Adrenal gland (tissue), 19 donors: ENCODE measurements at regions of chr3 and their contacts with region 1.

Region 1: DNA sequence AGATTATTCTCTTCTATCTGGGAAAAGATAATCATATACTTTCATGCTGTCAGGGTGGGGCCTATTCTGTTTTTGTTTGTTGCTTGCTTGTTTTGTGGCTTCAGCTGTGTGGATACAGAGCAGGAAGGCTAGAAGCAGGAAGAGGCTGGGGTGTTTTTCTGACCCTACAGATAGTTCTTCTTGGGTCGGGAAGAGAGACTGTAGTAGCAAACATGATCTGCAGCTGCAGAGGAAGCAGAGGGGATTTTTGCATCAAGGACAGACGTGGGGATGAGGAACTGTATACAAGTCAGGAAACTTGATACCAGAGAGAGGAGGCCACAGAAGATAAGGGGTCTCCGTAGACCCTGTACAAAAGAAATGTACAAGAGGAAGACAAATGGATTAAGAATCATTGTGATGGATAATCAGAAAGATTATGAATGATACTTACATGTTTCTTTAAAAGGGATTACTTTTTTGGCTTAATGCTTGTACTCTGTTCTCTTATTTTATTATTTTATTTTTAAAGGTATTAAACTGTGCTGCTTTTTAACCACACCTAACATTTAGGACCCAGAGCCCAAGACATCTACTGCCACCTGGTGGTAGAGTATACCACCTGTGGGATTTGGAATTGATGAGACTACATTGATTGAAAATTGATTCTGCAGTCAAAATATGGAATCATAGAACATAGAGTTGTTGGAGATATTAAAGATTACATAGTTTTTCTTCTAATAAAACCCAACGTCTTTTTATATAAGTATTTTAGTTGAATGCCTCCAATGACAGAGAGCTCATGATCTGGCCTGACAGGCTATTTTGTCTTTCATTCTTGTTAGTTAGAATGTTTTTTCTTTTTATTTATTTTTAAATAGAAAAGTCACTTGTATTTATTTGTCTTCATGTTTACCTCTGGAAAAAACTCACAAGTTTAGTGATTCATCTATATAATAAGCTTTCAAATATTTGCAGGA is 87.3 kb upstream of the ROPN1 start:
- DNase-seq: peak in 5 of 7 donors; percentile 21 to 50 (median 46)
- H3K4me3 ChIP-seq: no peak overlapping the region
- H3K27ac ChIP-seq: no peak overlapping the region
- H3K4me1 ChIP-seq: peaks cover 16 to 17% of the 10 kb centered on the region in 2 donors
- H3K27me3 ChIP-seq: no peaks in the 10 kb centered on the region
- CTCF ChIP-seq: peak; percentile 66 to 91 (median 72)
- POLR2A ChIP-seq: no peak

Region 2: DNA sequence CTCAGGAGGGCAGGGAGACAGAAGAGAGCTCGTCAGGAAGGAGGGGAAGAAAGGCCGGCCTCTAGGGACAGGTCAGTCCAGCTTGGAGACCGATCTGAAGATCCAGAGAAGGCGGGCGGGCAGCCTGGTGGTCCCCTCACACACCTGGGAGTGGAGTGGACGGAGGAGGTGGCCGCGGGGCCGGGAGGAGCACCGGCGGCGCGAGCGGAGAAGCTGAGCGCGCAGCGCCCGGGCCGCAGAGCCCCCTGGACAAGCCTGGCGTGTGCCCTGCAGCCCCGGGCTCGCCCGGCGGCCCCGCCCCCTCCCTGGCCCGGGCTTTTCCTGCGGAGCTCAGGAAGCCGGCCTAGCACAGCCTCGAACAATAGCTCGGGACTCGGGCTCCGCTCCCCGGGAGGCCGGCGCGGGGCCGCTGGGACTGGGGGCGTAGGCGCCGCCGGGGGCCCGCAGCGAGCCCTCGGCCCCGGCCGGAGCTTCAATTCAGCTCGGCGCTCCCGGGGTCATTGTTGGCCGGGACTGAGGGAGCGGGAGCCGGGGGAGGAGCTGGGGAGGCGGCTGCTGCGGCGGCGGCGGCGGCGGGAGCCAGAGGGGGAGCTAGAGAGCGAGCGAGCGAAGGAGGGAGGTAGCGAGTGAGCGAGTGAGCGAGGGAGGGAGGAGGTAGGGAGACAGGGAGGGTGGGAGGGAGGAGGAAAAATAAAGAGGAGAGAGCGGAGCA is 46.4 kb before region 1 on chr3:
- intact Hi-C with region 1: loop called in 1 of 2 experiments (anchors 5 kb)
- DNase-seq: peak; percentile 85 to 93 (median 89)
- H3K4me3 ChIP-seq: peak overlapping the region; percentile 7 to 83 (median 36)
- H3K27ac ChIP-seq: peak overlapping the region; percentile 82 to 96 (median 93)
- H3K4me1 ChIP-seq: peaks cover 0 to 15% of the 10 kb centered on the region in 2 donors
- H3K27me3 ChIP-seq: peaks cover 4% of the 10 kb centered on the region
- CTCF ChIP-seq: peak; percentile 43 to 73 (median 64)
- POLR2A ChIP-seq: peak in 1 of 2 donors; percentile 69

Region 3: GRCh38 chr3:124592621-124593441 is 513.6 kb after region 1 on chr3:
- intact Hi-C with region 1: no loop called
- DNase-seq: peak in 2 of 7 donors; percentile 14 to 22
- H3K4me3 ChIP-seq: no peak overlapping the region
- H3K27ac ChIP-seq: no peak overlapping the region
- H3K4me1 ChIP-seq: peaks cover 0 to 7% of the 10 kb centered on the region in 2 donors
- H3K27me3 ChIP-seq: no peaks in the 10 kb centered on the region
- CTCF ChIP-seq: no peak
- POLR2A ChIP-seq: no peak